MCF 10A (cell line): ENCODE measurements at regions of chr1 and their contacts with region 1.

Region 1: GRCh38 chr1:234656856-234657654 is 47.1 kb upstream of the IRF2BP2 start:
- DNase-seq: peak; percentile 100
- H3K4me3 Mint-ChIP-seq: peak overlapping the region; percentile 67
- H3K27ac Mint-ChIP-seq: peak overlapping the region; percentile 91
- H3K4me1 Mint-ChIP-seq: peaks cover 57% of the 10 kb centered on the region
- H3K27me3 Mint-ChIP-seq: no peaks in the 10 kb centered on the region
- CTCF ChIP-seq: no peak

Region 2: DNA sequence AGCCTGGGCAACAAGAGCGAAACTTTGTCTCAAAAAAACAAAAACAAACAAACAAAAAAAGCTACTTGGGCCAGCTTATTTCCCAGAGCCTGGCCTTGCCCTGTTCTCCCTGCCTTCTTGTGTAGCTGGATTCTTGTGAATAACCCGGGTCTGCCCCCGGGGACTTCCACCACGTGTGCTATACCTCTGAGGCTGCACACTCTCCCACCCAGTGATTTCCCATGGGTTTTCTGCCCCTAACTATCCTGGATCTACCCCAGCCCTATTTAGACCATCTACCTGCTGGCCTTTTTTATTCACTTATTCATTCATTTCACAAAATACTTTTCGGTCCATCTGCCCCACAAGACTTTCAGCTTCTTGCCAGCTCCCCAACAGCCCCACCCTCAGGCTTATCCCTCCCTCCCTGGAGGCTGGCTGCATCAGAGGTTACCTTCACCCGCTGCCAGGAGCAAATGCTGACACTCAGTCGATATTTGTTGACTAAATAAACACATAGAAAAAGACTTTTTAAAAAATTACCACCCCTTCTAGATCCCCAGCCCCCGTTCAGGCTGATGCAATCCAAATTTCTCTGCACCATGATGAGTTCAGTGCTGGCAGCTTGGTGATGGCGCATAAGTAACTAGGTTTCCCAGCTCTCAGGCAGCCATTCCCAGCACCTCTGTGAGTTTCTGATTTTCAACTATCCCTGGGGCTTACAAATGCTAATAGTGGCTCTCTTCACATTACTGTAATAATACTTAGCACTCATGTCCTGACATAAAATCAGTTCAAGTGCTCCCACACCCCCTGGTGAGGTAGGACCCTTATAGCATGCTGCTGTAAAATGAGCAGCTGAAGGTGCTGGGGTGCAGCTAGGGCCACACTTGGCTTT is 147.4 kb before region 1 on chr1:
- CTCF ChIA-PET with region 1: interaction called, 4 read pairs
- POLR2A ChIA-PET with region 1: interaction called, 13 read pairs
- intact Hi-C with region 1: no loop called
- DNase-seq: peak; percentile 84
- H3K4me3 Mint-ChIP-seq: peak overlapping the region; percentile 52
- H3K27ac Mint-ChIP-seq: peak overlapping the region; percentile 85
- H3K4me1 Mint-ChIP-seq: peaks cover 46% of the 10 kb centered on the region
- H3K27me3 Mint-ChIP-seq: no peaks in the 10 kb centered on the region
- CTCF ChIP-seq: no peak

Region 3: DNA sequence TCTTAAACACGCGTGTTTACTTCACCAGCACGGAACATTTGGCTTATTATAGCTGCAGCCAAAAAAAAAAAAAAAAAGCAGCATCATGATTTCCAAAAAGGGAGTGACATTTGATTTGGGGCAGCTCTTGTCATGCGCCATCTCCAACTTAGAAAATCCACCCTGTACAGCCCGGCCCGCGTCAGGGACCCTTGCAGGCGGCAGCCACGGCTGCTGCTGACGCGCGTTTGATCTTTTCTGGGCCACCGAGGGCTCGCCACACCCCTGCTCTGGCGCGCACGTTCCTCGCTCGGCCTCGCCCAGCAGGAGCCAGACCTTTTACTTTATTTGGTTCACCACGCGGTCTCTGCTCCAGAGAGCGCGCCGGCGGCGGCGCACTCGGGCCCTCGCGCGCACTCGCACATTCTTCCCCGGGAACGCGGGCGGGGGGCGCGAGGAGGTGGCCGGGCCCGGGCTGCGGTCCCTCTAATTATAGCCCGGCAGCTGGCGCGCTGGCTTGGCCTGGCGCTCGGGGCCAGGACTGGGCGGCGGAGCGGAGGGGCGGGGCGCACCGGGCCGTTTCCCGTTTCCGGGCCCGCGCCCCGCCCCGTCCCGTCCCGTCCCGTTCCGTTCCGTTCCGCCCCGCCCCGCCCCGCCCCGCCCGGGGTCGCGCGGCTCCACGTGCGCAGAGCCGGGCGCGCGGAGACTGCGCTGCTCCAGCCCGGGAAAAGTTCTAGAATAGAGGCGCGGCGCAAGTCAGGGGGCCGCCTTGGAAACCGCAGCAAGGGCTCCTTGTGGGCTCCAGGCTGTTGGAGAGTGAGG is 57.2 kb before region 1 on chr1:
- CTCF ChIA-PET with region 1: interaction called, 6 read pairs
- POLR2A ChIA-PET with region 1: interaction called, 110 read pairs
- intact Hi-C with region 1: no loop called
- DNase-seq: peak; percentile 93
- H3K4me3 Mint-ChIP-seq: peak overlapping the region; percentile 80
- H3K27ac Mint-ChIP-seq: peak overlapping the region; percentile 90
- H3K4me1 Mint-ChIP-seq: peaks cover 41% of the 10 kb centered on the region
- H3K27me3 Mint-ChIP-seq: no peaks in the 10 kb centered on the region
- CTCF ChIP-seq: no peak

Region 4: DNA sequence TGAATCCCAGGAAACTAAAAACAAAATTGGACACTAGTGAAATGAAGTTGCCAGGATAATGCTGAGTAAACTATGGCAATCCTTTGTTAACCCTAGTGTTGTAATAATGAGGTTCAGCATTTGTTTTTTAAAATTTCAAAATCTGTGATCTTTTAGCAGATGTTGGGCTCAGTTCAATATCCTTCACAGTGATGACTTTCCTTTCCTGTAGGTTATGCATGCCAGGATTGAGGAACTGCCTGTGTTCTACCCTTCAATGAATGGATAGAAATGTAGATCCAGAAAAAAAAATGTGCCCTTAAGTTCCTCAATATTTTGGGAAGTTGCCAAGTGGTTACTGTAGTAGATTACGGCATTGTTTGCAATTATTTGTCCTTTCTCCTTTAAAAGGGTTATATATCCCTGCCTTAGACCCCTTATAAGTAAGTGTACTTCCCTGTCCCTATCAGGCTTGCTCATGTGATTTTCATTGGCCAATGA is 11.5 kb before region 1 on chr1:
- CTCF ChIA-PET with region 1: interaction called, 6 read pairs
- POLR2A ChIA-PET with region 1: interaction called, 83 read pairs
- intact Hi-C with region 1: no loop called
- DNase-seq: no peak
- H3K4me3 Mint-ChIP-seq: no peak overlapping the region
- H3K27ac Mint-ChIP-seq: no peak overlapping the region
- H3K4me1 Mint-ChIP-seq: peaks cover 16% of the 10 kb centered on the region
- H3K27me3 Mint-ChIP-seq: no peaks in the 10 kb centered on the region
- CTCF ChIP-seq: no peak

Region 5: GRCh38 chr1:234702342-234703000 is 45.4 kb after region 1 on chr1:
- CTCF ChIA-PET with region 1: interaction called, 3 read pairs
- POLR2A ChIA-PET with region 1: interaction called, 16 read pairs
- intact Hi-C with region 1: no loop called
- DNase-seq: no peak
- H3K4me3 Mint-ChIP-seq: no peak overlapping the region
- H3K27ac Mint-ChIP-seq: no peak overlapping the region
- H3K4me1 Mint-ChIP-seq: peaks cover 3% of the 10 kb centered on the region
- H3K27me3 Mint-ChIP-seq: no peaks in the 10 kb centered on the region
- CTCF ChIP-seq: no peak

Region 6: GRCh38 chr1:235018161-235018560 is 361.1 kb after region 1 on chr1:
- CTCF ChIA-PET with region 1: no interaction called
- POLR2A ChIA-PET with region 1: interaction called, 19 read pairs
- intact Hi-C with region 1: no loop called
- DNase-seq: peak; percentile 100
- H3K4me3 Mint-ChIP-seq: no peak overlapping the region
- H3K27ac Mint-ChIP-seq: peak overlapping the region; percentile 0
- H3K4me1 Mint-ChIP-seq: peaks cover 25% of the 10 kb centered on the region
- H3K27me3 Mint-ChIP-seq: no peaks in the 10 kb centered on the region
- CTCF ChIP-seq: no peak

Region 7: DNA sequence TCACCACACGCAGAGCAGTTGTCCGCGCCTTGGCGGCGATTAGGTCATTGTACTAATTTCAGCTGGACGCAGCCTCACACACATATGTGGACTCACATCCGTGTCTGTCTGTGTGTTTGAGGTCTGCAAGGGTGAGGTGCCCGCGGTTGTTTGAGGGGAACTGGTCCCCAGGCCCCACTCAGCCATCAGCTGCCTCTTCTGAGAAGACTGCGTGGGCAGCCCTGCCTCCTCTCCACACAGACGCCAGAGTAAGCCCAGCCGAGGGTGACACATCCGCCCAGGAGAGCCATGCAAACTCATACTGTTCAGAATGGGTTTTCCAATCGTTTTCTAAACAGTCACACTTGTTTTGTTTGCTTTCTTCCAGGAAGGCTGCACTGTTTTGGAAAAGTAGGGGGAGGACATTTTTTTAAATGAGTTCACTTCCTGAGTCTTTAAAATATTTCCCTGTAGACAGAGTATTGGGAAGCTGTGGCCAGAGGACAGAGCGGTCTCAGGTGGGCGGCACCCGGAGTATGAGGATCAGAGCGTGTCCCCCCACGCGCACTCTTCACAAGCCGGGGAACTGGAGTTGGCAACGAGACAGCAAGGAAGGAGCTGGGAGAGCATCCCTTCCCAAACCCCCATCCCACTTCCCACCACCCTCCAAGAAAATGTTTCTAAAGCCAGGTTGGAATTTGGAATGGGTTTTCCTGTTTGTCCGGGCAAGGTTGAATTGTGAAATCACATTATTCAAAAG is 418.3 kb after region 1 on chr1:
- CTCF ChIA-PET with region 1: interaction called, 5 read pairs
- POLR2A ChIA-PET with region 1: interaction called, 63 read pairs
- intact Hi-C with region 1: no loop called
- DNase-seq: peak; percentile 92
- H3K4me3 Mint-ChIP-seq: no peak overlapping the region
- H3K27ac Mint-ChIP-seq: peak overlapping the region; percentile 52
- H3K4me1 Mint-ChIP-seq: peaks cover 30% of the 10 kb centered on the region
- H3K27me3 Mint-ChIP-seq: no peaks in the 10 kb centered on the region
- CTCF ChIP-seq: no peak

Region 8: DNA sequence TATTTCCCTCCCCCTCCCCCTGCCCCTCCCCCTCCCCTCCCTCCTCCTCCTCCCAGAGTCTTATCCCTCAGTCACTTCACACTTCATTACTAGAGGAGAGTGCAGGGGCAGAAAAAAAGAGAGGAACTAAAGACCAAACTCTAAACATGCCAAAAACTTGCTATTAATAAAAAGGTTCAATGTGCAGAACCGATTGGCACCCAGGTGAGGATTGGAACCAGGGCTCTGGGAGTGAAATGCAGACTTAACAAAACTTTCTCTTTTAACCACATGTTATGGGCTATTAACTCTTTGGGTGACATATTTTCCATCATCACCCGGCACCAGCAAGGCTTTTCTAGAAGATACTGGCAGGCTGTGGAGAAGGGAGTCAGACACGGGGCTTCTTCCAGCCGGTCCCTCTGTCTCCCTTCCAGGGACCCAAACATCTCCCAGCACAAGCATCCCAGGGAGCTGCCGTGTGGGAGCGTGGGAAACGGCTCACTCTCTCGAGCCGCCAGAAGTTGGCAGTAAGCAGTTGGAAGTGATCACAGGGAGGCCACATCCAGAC is 1394.3 kb after region 1 on chr1:
- CTCF ChIA-PET with region 1: no interaction called
- POLR2A ChIA-PET with region 1: no interaction called
- intact Hi-C with region 1: no loop called
- DNase-seq: no peak
- H3K4me3 Mint-ChIP-seq: no peak overlapping the region
- H3K27ac Mint-ChIP-seq: no peak overlapping the region
- H3K4me1 Mint-ChIP-seq: no peaks in the 10 kb centered on the region
- H3K27me3 Mint-ChIP-seq: no peaks in the 10 kb centered on the region
- CTCF ChIP-seq: no peak